ENCODE measurements at regions of chr4 and their contacts with region 1.

Region 1: GRCh38 chr4:142452161-142452855 is 393.8 kb downstream of the INPP4B start:
- DNase-seq: no peak
- ATAC-seq: no peak
- H3K4me3 ChIP-seq: no peak overlapping the region
- H3K27ac ChIP-seq: no peak overlapping the region
- H3K4me1 ChIP-seq: no peaks in the 10 kb centered on the region
- H3K27me3 ChIP-seq: no peaks in the 10 kb centered on the region
- CTCF ChIP-seq: no peak

Region 2: DNA sequence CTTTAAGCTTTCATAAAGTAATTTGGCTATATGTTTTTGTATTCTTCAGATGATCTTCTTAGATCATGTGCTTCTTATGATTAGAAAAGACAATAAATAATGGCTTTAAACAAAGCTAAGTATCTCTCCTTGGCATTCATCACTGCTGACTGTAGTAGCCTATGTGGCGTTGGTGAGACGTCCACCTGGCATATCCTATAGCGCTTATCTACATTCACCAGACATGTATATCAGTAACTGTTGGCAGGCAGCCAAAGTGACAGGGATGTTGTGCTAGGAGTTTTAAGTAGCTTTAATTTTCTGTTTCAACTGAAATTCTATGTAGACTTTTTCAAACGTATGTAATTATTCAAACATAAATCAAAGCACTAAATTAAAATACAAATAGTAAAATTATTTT is 539.5 kb before region 1 on chr4:
- intact Hi-C with region 1: no loop called
- DNase-seq: no peak
- ATAC-seq: no peak
- H3K4me3 ChIP-seq: no peak overlapping the region
- H3K27ac ChIP-seq: no peak overlapping the region
- H3K4me1 ChIP-seq: no peaks in the 10 kb centered on the region
- H3K27me3 ChIP-seq: no peaks in the 10 kb centered on the region
- CTCF ChIP-seq: no peak

Region 3: GRCh38 chr4:142435599-142436235 is 16.6 kb before region 1 on chr4:
- intact Hi-C with region 1: loop called in 1 of 3 experiments (anchors 2 kb)
- DNase-seq: peak in 3 of 6 donors; percentile 9 to 33 (median 25)
- ATAC-seq: no peak
- H3K4me3 ChIP-seq: no peak overlapping the region
- H3K27ac ChIP-seq: no peak overlapping the region
- H3K4me1 ChIP-seq: no peaks in the 10 kb centered on the region
- H3K27me3 ChIP-seq: no peaks in the 10 kb centered on the region
- CTCF ChIP-seq: no peak

Measured in pancreas (tissue), 10 donors.